AG04449 (cell line): ENCODE measurements at regions of chr7 and their contacts with region 1.

Region 1: DNA sequence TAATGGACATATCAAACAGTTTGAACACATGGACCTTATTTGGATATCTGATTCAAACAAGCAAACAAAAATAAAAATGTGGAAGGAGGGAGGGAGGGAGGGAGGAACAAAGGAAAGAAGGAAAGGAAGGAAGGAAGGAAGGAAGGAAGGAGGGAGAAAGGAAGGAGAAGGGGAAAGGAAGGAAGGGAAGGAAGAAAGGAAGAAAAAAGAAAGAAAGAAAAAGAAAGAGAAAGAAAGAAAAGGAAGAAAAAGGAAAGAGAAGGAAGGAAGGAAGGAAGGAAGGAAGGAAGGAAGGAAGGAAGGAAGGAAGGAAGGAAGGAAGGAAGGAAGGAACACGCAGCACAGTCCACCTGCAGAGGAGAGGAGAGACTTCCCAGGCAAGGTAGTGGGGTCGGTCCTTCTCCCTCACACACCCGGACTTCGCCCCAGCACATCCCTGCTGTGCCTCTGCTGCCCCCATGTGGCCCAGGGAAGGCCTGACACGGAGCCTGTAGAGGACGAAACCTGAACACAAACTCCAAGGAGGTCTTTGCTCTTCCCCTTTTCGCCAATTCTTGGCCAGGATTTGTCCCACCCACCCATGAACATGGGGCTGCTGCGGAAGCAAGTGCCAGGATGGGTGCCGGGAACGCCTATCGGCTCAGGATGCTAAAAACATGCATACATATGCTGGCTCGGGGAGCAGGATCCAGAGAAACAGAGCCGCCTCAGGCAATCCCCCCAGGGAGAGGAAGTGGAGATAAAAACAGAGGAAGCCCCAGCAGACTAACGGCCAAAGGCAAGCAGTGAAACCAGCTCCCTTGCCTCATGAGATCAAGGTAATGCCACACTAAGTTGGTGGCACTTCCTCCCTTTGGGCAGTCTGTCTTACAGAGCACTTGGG is 52.3 kb upstream of the DGKI start:
- DNase-seq: no peak
- H3K4me3 ChIP-seq: no peak overlapping the region
- CTCF ChIP-seq: peak; percentile 98

Region 2: GRCh38 chr7:137820677-137821420 is 78.2 kb before region 1 on chr7:
- CTCF ChIA-PET with region 1: interaction called, 11 read pairs
- POLR2A ChIA-PET with region 1: no interaction called
- DNase-seq: peak; percentile 47
- H3K4me3 ChIP-seq: no peak overlapping the region
- CTCF ChIP-seq: no peak

Region 3: DNA sequence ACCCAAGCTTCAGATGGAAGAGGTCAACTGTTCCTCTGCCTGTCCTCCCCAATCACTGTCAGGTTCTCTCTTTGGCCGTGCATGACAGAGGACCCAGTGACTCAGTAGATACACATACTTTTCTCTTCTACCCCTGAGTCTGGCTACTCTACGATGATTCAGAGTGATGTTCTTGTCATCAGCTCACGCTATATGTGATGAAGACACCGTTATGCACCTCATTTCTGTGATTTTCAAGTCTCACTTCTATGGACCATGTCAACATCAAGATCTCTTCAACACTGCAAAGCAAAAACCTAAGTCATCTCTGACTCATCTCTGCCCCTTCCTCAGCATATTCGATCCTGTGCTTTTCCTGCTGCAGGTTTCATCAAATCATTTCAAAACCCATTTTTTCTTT is 24.3 kb after region 1 on chr7:
- CTCF ChIA-PET with region 1: interaction called, 21 read pairs
- POLR2A ChIA-PET with region 1: no interaction called
- DNase-seq: peak; percentile 68
- H3K4me3 ChIP-seq: no peak overlapping the region
- CTCF ChIP-seq: no peak

Region 4: DNA sequence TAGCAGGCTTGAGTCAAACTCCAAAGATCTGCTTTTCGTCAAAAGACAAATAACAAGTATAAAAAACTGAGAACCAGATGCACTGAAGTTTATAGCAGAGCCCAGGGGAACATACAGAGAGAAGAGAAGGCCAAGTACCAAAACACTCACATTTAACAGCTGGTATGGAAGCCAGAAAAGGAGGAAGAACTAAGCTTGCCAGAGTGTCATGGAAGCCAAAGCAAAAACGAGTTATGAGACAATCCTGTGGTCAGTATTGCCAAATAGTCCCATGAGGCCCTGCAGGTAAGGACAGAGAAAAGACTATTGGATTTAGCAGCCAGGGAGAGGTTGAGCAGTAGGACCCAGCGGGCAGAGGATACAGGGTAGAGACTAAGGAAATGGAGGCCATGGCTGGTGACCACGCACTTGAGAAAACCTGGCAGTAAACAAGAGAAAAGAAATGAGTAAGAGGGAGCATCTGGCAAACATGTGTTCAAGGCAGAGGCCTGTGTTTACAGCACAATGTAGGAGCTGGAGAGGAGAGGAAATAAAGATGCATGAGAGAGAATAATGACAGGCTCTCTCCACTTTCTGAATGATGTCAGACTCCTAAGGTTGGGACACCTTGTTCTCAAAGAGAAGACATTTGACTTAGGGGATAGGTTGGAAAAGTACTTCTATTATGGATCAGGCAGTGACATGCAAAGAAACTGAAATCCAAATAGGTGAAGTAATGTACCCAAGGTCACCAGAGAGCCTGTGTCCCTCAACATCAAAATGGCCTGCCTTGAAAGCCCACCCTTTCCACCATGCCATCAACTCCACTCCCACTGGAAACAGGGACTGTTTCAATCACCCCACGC is 93.7 kb after region 1 on chr7:
- CTCF ChIA-PET with region 1: interaction called, 831 read pairs
- POLR2A ChIA-PET with region 1: no interaction called
- DNase-seq: no peak
- H3K4me3 ChIP-seq: peak overlapping the region; percentile 2; the same call in 1 of the 2 replicates
- CTCF ChIP-seq: no peak

Region 5: GRCh38 chr7:138008547-138009349 is 109.7 kb after region 1 on chr7:
- CTCF ChIA-PET with region 1: interaction called, 831 read pairs
- POLR2A ChIA-PET with region 1: interaction called, 3 read pairs
- DNase-seq: no peak
- H3K4me3 ChIP-seq: no peak overlapping the region
- CTCF ChIP-seq: peak; percentile 66

Region 6: DNA sequence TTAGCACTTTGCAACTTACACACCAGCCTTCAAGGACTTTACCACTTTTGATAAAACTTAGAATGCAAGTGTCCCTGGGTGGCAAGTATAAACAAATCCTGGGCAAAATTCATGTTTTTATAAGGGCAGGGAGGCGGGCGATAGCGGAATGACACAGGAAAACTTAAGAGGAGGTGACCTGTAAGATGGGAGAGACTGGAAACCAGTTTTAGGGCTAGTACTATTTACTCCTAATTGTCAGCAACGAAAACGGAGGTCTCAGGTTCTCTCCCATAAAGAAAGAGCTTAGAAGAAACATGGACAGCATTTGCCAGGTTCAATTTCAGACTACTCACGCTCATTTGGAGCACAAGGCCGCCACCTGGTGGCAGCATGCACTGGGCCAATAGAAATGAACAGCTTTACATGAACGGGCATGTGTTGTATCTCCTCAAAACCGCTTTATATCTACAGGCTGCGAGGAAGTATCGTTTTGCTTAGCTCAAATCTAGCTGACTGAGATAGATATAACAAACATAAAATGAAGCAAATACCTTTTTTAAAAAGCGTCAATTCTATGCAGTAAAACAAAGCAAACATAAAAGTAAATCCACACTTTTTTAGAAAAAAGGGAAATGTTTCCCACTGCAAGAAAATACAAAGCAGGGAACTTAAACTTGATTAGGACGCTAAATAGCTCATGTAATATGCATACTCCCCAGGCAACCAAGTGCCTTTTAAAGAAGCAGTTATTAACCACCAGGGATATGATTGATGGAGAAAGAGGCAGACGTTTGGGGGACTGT is 839.7 kb after region 1 on chr7:
- CTCF ChIA-PET with region 1: interaction called, 28 read pairs
- POLR2A ChIA-PET with region 1: no interaction called
- DNase-seq: peak; percentile 49
- H3K4me3 ChIP-seq: no peak overlapping the region
- CTCF ChIP-seq: peak; percentile 91